Naive thymus-derived CD4-positive, alpha-beta T cell (primary cell): ENCODE measurements at regions of chr21 and their contacts with region 1.

Region 1: DNA sequence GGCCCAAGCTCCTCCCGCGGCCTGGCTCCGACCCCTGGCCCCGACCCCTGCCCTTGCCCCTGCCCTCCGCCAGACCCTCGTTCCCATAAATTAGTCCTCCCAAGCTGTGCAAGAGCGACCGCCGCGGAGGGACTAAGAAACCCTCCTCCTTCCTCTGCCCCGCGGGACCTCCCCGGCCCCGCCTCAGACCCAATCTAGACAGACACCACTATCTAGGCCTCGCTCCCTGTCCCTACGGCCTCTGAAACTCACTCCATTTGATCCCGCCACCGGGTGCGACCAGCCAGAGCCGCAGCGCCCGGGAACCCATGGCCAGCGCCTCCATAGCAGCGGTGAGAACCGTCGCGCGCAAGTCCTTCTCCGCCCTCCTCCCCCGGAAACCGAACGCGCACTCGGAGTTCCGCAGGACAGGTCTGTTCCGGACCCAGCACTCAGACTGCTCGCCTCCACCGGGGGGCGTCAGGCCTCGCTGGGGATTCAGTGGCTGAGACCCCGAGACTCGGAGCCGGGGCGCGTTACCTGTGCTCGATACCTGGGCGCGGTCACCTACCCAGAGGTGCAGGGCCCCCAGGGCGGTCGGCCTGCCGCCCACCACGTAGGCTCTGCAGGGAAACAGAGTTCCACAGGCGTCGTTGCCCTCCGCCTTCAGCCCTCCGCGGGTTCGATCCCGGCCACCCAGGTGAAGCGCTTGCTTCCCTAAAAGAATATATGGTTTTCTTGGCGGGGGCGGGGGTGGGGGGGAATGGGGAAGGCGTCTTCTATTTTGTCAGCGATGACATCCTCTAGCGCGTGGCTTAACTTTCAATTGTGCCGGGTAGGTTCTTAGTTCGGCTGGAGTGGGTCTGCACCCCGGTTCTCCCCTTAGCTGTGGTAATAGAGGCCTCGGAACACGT is at the start of gene MRPL39:
- DNase-seq: peak; percentile 74 to 88 (median 82)
- ATAC-seq: peak; percentile 93
- H3K4me3 ChIP-seq: peak within 1 kb of the TSS; percentile 90
- H3K4me3 Mint-ChIP-seq: peak within 1 kb of the TSS; percentile 89 to 100 (median 100)
- H3K27ac ChIP-seq: peak within 1 kb of the TSS; percentile 76
- H3K27ac Mint-ChIP-seq: peak within 1 kb of the TSS; percentile 91 to 100 (median 99)
- H3K4me1 ChIP-seq: peaks cover 17 to 21% of the 10 kb centered on the region in 2 donors
- H3K4me1 Mint-ChIP-seq: peaks cover 18 to 53% (median 47%) of the 10 kb centered on the region in 7 donors
- H3K27me3 ChIP-seq: no peaks in the 10 kb centered on the region
- H3K27me3 Mint-ChIP-seq: peaks cover 0 to 2% (median 0%) of the 10 kb centered on the region in 5 donors
- total RNA-seq, gene MRPL39: 7.6 to 35.7 (median 19.5) TPM

Region 2: GRCh38 chr21:24671901-24672300 is 935.5 kb before region 1 on chr21:
- CTCF ChIA-PET with region 1: no interaction called
- POLR2A ChIA-PET with region 1: no interaction called
- intact Hi-C with region 1: no loop called
- DNase-seq: no peak
- ATAC-seq: no peak
- H3K4me3 ChIP-seq: no peak overlapping the region
- H3K4me3 Mint-ChIP-seq: no peak overlapping the region
- H3K27ac ChIP-seq: no peak overlapping the region
- H3K27ac Mint-ChIP-seq: no peak overlapping the region
- H3K4me1 ChIP-seq: no peaks in the 10 kb centered on the region
- H3K4me1 Mint-ChIP-seq: no peaks in the 10 kb centered on the region
- H3K27me3 ChIP-seq: no peaks in the 10 kb centered on the region
- H3K27me3 Mint-ChIP-seq: no peaks in the 10 kb centered on the region

Region 3: DNA sequence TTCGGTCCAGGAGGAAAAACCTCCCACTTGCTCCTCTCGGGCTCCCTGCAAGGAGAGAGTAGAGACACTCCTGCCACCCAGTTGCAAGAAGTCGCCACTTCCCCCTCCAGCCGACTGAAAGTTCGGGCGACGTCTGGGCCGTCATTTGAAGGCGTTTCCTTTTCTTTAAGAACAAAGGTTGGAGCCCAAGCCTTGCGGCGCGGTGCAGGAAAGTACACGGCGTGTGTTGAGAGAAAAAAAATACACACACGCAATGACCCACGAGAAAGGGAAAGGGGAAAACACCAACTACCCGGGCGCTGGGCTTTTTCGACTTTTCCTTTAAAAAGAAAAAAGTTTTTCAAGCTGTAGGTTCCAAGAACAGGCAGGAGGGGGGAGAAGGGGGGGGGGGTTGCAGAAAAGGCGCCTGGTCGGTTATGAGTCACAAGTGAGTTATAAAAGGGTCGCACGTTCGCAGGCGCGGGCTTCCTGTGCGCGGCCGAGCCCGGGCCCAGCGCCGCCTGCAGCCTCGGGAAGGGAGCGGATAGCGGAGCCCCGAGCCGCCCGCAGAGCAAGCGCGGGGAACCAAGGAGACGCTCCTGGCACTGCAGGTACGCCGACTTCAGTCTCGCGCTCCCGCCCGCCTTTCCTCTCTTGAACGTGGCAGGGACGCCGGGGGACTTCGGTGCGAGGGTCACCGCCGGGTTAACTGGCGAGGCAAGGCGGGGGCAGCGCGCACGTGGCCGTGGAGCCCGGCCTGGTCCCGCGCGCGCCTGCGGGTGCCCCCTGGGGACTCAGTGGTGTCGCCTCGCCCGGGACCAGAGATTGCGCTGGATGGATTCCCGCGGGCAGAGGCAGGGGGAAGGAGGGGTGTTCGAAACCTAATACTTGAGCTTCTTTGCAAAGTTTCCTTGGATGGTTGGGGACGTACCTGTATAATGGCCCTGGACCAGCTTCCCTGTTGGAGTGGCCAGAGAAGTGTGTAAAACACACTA is 45.4 kb before region 1 on chr21:
- CTCF ChIA-PET with region 1: no interaction called
- POLR2A ChIA-PET with region 1: interaction called, 3 read pairs
- intact Hi-C with region 1: loop called (anchors 1 kb)
- DNase-seq: peak; percentile 12 to 93 (median 43)
- ATAC-seq: peak; percentile 74
- H3K4me3 ChIP-seq: peak overlapping the region; percentile 34
- H3K4me3 Mint-ChIP-seq: peak overlapping the region; percentile 88 to 98 (median 94)
- H3K27ac ChIP-seq: peak overlapping the region; percentile 61
- H3K27ac Mint-ChIP-seq: peak overlapping the region; percentile 69 to 96 (median 92)
- H3K4me1 ChIP-seq: peaks cover 11 to 29% of the 10 kb centered on the region in 2 donors
- H3K4me1 Mint-ChIP-seq: peaks cover 27 to 68% (median 50%) of the 10 kb centered on the region in 7 donors
- H3K27me3 ChIP-seq: no peaks in the 10 kb centered on the region
- H3K27me3 Mint-ChIP-seq: no peaks in the 10 kb centered on the region

Region 4: GRCh38 chr21:25639551-25640201 is 32.3 kb after region 1 on chr21:
- CTCF ChIA-PET with region 1: interaction called, 9 read pairs
- POLR2A ChIA-PET with region 1: interaction called, 6 read pairs
- intact Hi-C with region 1: loop called (anchors 1 kb)
- DNase-seq: peak; percentile 19 to 54 (median 38)
- ATAC-seq: peak; percentile 89
- H3K4me3 ChIP-seq: peak overlapping the region; percentile 68
- H3K4me3 Mint-ChIP-seq: peak overlapping the region; percentile 74 to 88 (median 82)
- H3K27ac ChIP-seq: peak overlapping the region; percentile 9
- H3K27ac Mint-ChIP-seq: no peak overlapping the region
- H3K4me1 ChIP-seq: peaks cover 0 to 10% of the 10 kb centered on the region in 2 donors
- H3K4me1 Mint-ChIP-seq: peaks cover 14 to 22% (median 17%) of the 10 kb centered on the region in 7 donors
- H3K27me3 ChIP-seq: no peaks in the 10 kb centered on the region
- H3K27me3 Mint-ChIP-seq: peaks cover 20 to 47% (median 38%) of the 10 kb centered on the region in 5 donors

Region 5: GRCh38 chr21:25801217-25802014 is 194.0 kb after region 1 on chr21:
- CTCF ChIA-PET with region 1: interaction called, 4 read pairs
- POLR2A ChIA-PET with region 1: no interaction called
- intact Hi-C with region 1: loop called (anchors 1 kb)
- DNase-seq: peak; percentile 66 to 89 (median 84)
- ATAC-seq: peak; percentile 100
- H3K4me3 ChIP-seq: no peak overlapping the region
- H3K4me3 Mint-ChIP-seq: peak overlapping the region in 8 of 10 donors; percentile 7 to 78 (median 60)
- H3K27ac ChIP-seq: no peak overlapping the region
- H3K27ac Mint-ChIP-seq: peak overlapping the region in 3 of 9 donors; percentile 7 to 15 (median 10)
- H3K4me1 ChIP-seq: no peaks in the 10 kb centered on the region
- H3K4me1 Mint-ChIP-seq: peaks cover 2 to 10% (median 7%) of the 10 kb centered on the region in 7 donors
- H3K27me3 ChIP-seq: no peaks in the 10 kb centered on the region
- H3K27me3 Mint-ChIP-seq: peaks cover 5 to 31% (median 19%) of the 10 kb centered on the region in 5 donors

Region 6: GRCh38 chr21:26715878-26716506 is 1108.6 kb after region 1 on chr21:
- CTCF ChIA-PET with region 1: interaction called, 6 read pairs
- POLR2A ChIA-PET with region 1: no interaction called
- intact Hi-C with region 1: loop called in 1 of 2 experiments (anchors 1 kb)
- DNase-seq: peak in 4 of 9 donors; percentile 4 to 15 (median 5)
- ATAC-seq: peak; percentile 46
- H3K4me3 ChIP-seq: no peak overlapping the region
- H3K4me3 Mint-ChIP-seq: no peak overlapping the region
- H3K27ac ChIP-seq: no peak overlapping the region
- H3K27ac Mint-ChIP-seq: no peak overlapping the region
- H3K4me1 ChIP-seq: no peaks in the 10 kb centered on the region
- H3K4me1 Mint-ChIP-seq: no peaks in the 10 kb centered on the region
- H3K27me3 ChIP-seq: no peaks in the 10 kb centered on the region
- H3K27me3 Mint-ChIP-seq: peaks cover 2 to 14% (median 6%) of the 10 kb centered on the region in 5 donors